ENCODE measurements at regions of chr1 and their contacts with region 1.

Region 1: GRCh38 chr1:156129706-156130581 is 15.4 kb downstream of the LMNA start:
- DNase-seq: peak; percentile 89
- H3K4me3 Mint-ChIP-seq: no peak overlapping the region
- H3K27ac Mint-ChIP-seq: peak overlapping the region; percentile 50
- H3K4me1 Mint-ChIP-seq: peaks cover 52% of the 10 kb centered on the region
- H3K27me3 Mint-ChIP-seq: no peaks in the 10 kb centered on the region

Region 2: GRCh38 chr1:156065212-156065611 is 64.7 kb before region 1 on chr1:
- CTCF ChIA-PET with region 1: interaction called, 18 read pairs
- POLR2A ChIA-PET with region 1: no interaction called
- intact Hi-C with region 1: no loop called
- DNase-seq: no peak
- H3K4me3 Mint-ChIP-seq: no peak overlapping the region
- H3K27ac Mint-ChIP-seq: no peak overlapping the region
- H3K4me1 Mint-ChIP-seq: peaks cover 20% of the 10 kb centered on the region
- H3K27me3 Mint-ChIP-seq: no peaks in the 10 kb centered on the region

Region 3: GRCh38 chr1:156090822-156091188 is 39.1 kb before region 1 on chr1:
- CTCF ChIA-PET with region 1: interaction called, 1,097 read pairs
- POLR2A ChIA-PET with region 1: interaction called, 180 read pairs
- intact Hi-C with region 1: loop called (anchors 1 kb)
- DNase-seq: peak; percentile 93
- H3K4me3 Mint-ChIP-seq: peak overlapping the region; percentile 10
- H3K27ac Mint-ChIP-seq: peak overlapping the region; percentile 42
- H3K4me1 Mint-ChIP-seq: peaks cover 13% of the 10 kb centered on the region
- H3K27me3 Mint-ChIP-seq: peaks cover 12% of the 10 kb centered on the region

Region 4: GRCh38 chr1:156114101-156114916 is 15.6 kb before region 1 on chr1 and contains the start of gene LMNA:
- CTCF ChIA-PET with region 1: interaction called, 57 read pairs
- POLR2A ChIA-PET with region 1: interaction called, 57 read pairs
- intact Hi-C with region 1: loop called (anchors 1 kb)
- DNase-seq: peak; percentile 92
- H3K4me3 Mint-ChIP-seq: peak within 1 kb of the TSS; percentile 93
- H3K27ac Mint-ChIP-seq: peak within 1 kb of the TSS; percentile 87
- H3K4me1 Mint-ChIP-seq: peaks cover 23% of the 10 kb centered on the region
- H3K27me3 Mint-ChIP-seq: no peaks in the 10 kb centered on the region
- total RNA-seq, gene LMNA: 210 to 211 TPM

Measured in activated CD4-positive, alpha-beta memory T cell treated with anti-CD3 and anti-CD28 coated beads for 36 hours (primary cell).